ENCODE measurements at regions of chr5 and their contacts with region 1.

Region 1: GRCh38 chr5:68962757-68963484 is 130.9 kb upstream of the SLC30A5 start:
- DNase-seq: peak in 2 of 3 donors; percentile 64 to 82
- ATAC-seq: peak; percentile 81
- H3K4me3 ChIP-seq: no peak overlapping the region
- H3K4me1 ChIP-seq: peaks cover 17% of the 10 kb centered on the region
- CTCF ChIP-seq: peak; percentile 61

Region 2: GRCh38 chr5:68295772-68296171 is 667.1 kb before region 1 on chr5:
- intact Hi-C with region 1: loop called in 1 of 2 experiments (anchors 5 kb)
- DNase-seq: no peak
- ATAC-seq: no peak
- H3K4me3 ChIP-seq: no peak overlapping the region
- H3K4me1 ChIP-seq: no peaks in the 10 kb centered on the region
- CTCF ChIP-seq: no peak

Measured in mucosa of descending colon (tissue), 3 donors.